Sigmoid colon (tissue), 7 donors: ENCODE measurements at regions of chr1 and their contacts with region 1.

Region 1: DNA sequence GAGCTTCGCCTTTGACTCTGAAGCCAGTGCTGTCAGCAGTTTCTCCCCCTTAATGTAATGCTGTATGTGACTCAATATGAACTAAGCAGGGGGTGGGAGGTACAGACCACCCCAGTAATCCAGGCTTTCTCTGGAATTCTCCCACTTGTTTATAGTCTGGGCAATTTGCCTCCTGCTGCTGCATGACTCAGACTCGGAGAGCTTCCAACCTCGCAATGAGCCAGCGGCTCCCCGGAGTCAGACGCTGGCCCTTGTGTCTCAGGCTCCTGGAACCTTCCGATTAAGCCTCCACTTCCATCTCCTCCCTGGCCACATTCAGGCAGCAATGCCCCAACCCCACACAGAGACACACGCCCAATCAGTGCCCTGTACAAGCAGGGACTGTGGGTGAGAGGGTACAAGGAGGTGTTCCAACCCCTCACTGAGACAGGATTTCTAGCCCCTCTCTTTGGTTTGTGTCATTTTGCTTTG is 471.7 kb upstream of the VAMP3 start:
- DNase-seq: peak; percentile 84
- H3K4me3 ChIP-seq: no peak overlapping the region
- H3K27ac ChIP-seq: peak overlapping the region; percentile 49 to 83 (median 68)
- H3K4me1 ChIP-seq: peaks cover 0 to 41% (median 36%) of the 10 kb centered on the region in 4 donors
- H3K27me3 ChIP-seq: no peaks in the 10 kb centered on the region
- CTCF ChIP-seq: no peak
- EP300 ChIP-seq: peak in 1 of 4 donors; percentile 36
- POLR2A ChIP-seq: no peak

Region 2: DNA sequence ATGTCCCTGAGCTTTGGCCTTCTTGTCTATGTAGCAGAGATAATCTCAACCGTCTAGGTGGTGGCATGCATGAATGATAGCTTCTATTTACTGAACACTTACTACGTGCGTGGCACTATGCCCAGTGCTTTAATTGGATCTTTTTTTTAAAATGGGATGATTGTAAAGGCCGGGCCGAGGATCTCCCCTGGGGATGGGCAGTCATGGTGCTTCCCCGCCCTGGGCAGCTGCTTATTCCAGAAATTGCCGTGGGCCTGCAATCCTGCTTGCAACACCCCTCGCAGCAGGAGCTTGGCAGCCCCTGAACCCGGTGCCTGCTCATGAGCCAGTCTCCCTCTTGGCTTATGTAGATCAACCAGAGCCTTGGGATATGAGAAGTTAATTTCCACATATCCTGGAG is 153.4 kb before region 1 on chr1:
- intact Hi-C with region 1: no loop called
- DNase-seq: no peak
- H3K4me3 ChIP-seq: no peak overlapping the region
- H3K27ac ChIP-seq: no peak overlapping the region
- H3K4me1 ChIP-seq: peaks cover 0 to 9% (median 4%) of the 10 kb centered on the region in 4 donors
- H3K27me3 ChIP-seq: peaks cover 0 to 10% (median 0%) of the 10 kb centered on the region in 3 donors
- CTCF ChIP-seq: no peak
- EP300 ChIP-seq: no peak
- POLR2A ChIP-seq: no peak

Region 3: DNA sequence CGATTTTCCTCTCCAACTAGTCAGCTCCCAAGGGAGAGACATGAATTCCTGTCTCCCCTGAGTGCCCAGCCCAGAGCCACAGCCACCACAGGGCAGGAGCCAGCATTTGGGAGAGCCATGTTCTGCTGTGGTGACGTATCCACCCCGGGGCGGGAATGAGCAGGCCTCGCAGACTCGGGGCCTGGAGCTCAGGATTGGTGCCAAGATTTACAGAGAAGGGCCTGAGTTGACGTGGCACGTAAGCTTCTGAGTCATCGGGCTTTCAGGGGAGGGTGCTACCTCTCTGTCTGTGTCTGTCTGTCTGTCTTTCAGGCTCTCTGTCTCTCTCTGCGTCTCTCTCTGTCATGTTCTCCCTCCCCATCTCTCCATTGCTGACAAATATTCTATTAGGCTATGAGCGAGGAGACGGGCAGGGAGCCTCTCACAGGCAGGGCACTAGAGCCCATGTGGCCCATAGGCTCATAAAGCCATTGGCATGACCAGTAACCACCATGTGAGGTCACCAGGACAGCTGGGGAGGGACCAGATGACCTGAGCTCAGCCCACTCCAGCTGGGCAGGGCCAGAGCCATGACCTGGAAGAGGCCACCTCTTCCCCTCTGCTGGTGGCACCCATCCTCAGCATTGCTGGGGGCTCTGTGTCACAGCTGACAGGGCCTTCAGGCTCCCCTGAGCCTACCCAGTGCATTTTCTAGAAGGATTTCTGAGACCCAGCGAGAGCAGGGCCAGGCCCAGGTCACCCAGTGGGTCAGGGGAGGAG is 171.7 kb after region 1 on chr1:
- intact Hi-C with region 1: loop called (anchors 10 kb)
- DNase-seq: peak; percentile 92
- H3K4me3 ChIP-seq: no peak overlapping the region
- H3K27ac ChIP-seq: peak overlapping the region; percentile 56 to 64 (median 60)
- H3K4me1 ChIP-seq: peaks cover 0 to 34% (median 26%) of the 10 kb centered on the region in 4 donors
- H3K27me3 ChIP-seq: no peaks in the 10 kb centered on the region
- CTCF ChIP-seq: no peak
- EP300 ChIP-seq: peak in 1 of 4 donors; percentile 9
- POLR2A ChIP-seq: no peak

Region 4: DNA sequence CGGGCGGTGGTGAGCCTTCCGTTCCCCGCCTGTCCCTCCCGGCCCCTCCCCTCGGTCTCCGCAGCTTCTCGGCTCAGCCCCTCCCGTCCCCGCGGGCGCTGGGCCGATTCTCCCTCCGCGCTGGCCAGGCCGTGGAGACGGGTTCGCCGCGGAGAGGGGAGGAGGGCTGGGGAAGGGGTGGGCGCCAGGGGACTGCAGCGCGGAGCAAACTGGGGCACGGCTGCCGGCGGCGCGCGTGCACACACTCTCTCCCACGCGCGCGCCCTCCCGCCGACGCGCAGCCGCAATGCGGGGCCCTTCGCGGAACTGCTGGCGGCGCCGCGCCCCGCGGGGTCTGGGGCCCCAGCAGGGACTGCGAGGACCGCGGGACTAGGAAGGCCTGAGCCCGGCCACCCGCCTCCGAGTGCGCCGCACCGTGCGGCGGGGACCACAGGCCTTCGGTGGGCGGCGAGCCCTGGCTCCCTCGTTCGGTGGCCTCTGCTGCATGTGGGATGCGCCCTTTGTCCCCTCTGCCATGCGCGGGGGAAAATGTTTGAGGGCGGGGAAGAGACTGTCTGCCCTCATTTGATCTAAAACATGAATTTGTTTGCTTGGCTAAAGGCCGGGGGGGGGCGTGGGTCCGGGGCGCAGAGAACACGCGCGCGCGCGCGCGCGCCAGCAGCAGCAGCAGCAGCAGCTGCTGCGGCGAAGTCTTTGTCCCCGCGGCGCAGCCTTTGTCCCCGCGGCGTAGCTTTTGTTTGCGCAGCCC is 381.0 kb after region 1 on chr1:
- intact Hi-C with region 1: no loop called
- DNase-seq: peak; percentile 78
- H3K4me3 ChIP-seq: peak overlapping the region; percentile 50 to 88 (median 68)
- H3K27ac ChIP-seq: peak overlapping the region; percentile 54 to 69 (median 60)
- H3K4me1 ChIP-seq: peaks cover 0 to 19% (median 12%) of the 10 kb centered on the region in 4 donors
- H3K27me3 ChIP-seq: no peaks in the 10 kb centered on the region
- CTCF ChIP-seq: no peak
- EP300 ChIP-seq: no peak
- POLR2A ChIP-seq: no peak